ENCODE measurements at regions of chrX and their contacts with region 1.

Region 1: DNA sequence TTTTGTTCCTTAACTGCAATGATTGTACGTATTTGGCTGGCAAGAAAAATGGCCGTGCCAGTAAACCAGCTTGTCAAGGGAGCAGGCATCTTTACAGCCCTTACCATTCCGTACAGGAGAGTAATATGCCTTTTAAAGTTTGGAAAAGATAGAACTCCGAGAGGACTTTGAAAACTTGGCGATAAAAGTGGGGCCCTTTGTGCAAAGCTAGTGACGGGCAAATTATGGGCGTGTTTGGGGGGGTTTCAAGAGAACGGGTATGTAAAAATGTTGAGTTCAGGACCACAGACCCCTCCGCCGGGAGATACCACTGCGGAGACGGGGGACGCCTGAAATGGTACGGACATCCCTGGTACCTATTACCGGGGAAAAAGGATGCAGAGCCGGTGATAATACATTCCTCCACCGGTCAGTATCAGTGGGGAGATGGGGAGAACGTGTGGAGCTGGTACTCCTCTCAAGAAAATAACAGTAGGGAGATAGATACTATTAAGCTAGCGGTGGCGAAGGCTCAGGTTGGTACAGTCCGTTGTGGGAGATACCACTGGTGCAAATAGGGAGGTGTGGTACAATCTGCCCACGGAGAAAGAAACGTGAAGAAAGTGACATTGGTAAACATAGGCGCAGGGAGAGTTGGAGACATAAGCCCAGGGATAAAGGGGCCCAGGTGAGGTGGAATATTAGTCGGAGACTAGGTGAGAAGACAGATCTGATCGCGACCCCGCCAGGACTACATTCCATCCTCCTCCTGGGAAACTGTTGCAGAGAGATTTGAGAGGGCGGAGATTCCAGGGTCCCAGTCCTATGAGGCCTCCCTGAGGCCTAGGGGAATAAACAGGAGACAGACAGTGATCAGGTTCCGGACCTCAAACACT is 14.5 kb downstream of the SPACA5 start:
- DNase-seq: peak; percentile 84
- H3K4me3 ChIP-seq: peak overlapping the region; percentile 56 to 90 (median 61)
- H3K27ac ChIP-seq: peak overlapping the region; percentile 98
- H3K4me1 ChIP-seq: peaks cover 4% of the 10 kb centered on the region
- H3K27me3 ChIP-seq: no peaks in the 10 kb centered on the region
- CTCF ChIP-seq: no peak
- POLR2A ChIP-seq: no peak

Region 2: DNA sequence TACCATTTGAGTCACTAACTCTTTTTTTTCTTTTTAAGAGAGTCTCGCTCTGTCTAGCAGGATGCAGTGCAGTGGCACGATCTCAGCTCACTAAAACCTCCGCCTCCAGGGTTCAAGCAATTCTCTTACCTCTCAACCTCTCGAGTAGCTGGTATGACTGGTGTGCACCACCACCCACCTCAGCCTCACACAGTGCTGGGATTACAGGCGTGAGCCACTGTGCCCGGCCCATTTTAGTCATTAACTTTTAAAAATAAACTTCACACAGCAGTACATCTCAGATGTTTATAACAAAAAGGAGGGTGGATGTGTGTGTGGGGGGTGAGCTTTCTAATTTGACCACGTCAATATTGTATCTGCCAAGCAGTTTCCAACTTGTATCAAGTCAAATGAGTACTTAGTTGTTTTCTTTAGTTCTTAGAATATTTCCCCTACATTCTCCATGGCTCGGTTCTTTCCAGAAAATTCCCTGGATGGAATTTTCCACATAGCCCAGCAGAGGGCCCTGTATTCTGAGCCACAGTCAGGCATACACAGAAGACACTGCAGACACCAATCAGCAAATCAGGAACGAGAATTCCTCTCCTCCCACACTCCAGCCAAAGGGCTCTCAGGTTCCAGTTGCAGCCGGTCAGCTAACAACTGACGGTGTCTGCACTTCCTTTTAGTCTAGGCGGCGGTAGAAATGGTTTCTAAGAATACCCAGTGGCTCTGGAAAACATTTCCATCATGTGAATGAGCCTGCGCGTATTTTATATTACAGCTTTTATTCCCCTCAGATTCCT is 480.3 kb before region 1 on chrX:
- CTCF ChIA-PET with region 1: no interaction called
- POLR2A ChIA-PET with region 1: no interaction called
- dilution Hi-C with region 1: no loop called
- intact Hi-C with region 1: loop called (anchors 1 kb)
- DNase-seq: peak; percentile 92
- H3K4me3 ChIP-seq: peak overlapping the region in 1 of 3 experiments; percentile 32
- H3K27ac ChIP-seq: peak overlapping the region; percentile 37
- H3K4me1 ChIP-seq: peaks cover 4% of the 10 kb centered on the region
- H3K27me3 ChIP-seq: no peaks in the 10 kb centered on the region
- CTCF ChIP-seq: peak; percentile 47 to 54
- POLR2A ChIP-seq: no peak

Region 3: GRCh38 chrX:47658684-47659515 is 362.4 kb before region 1 on chrX and contains the start of gene UXT:
- CTCF ChIA-PET with region 1: no interaction called
- POLR2A ChIA-PET with region 1: no interaction called
- dilution Hi-C with region 1: no loop called
- intact Hi-C with region 1: loop called (anchors 1 kb)
- DNase-seq: peak; percentile 91
- H3K4me3 ChIP-seq: peak within 1 kb of the TSS; percentile 17 to 80 (median 77)
- H3K27ac ChIP-seq: peak within 1 kb of the TSS; percentile 79
- H3K4me1 ChIP-seq: peaks cover 5% of the 10 kb centered on the region
- H3K27me3 ChIP-seq: no peaks in the 10 kb centered on the region
- CTCF ChIP-seq: no peak
- POLR2A ChIP-seq: peak; percentile 54
- total RNA-seq, gene UXT: 91.2 and 95.7 TPM in 2 replicates

Region 4: GRCh38 chrX:47697191-47697590 is 324.1 kb before region 1 on chrX:
- CTCF ChIA-PET with region 1: no interaction called
- POLR2A ChIA-PET with region 1: no interaction called
- dilution Hi-C with region 1: no loop called
- intact Hi-C with region 1: no loop called
- DNase-seq: no peak
- H3K4me3 ChIP-seq: no peak overlapping the region
- H3K27ac ChIP-seq: no peak overlapping the region
- H3K4me1 ChIP-seq: no peaks in the 10 kb centered on the region
- H3K27me3 ChIP-seq: peaks cover 2 to 4% of the 10 kb centered on the region in 2 experiments
- CTCF ChIP-seq: no peak
- POLR2A ChIP-seq: no peak

Region 5: DNA sequence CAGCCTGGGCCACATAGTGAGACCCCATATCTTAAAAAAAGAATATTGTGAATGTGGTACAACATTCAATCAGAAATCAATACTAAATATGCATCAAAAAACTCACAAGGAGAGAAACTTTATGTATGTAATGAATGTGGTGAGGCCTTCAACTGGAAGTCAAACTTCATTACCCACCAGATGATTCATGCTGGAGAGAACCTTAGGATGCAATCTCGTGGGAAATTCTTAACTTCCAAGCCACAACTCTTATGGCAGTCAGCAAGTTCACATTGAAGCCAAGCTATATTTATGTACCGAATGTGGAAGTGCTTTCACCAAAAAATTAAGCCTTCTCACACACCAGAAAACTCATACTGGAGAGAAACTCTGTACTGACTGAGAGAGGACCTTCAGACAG is 277.8 kb before region 1 on chrX:
- CTCF ChIA-PET with region 1: no interaction called
- POLR2A ChIA-PET with region 1: no interaction called
- dilution Hi-C with region 1: no loop called
- intact Hi-C with region 1: no loop called
- DNase-seq: no peak
- H3K4me3 ChIP-seq: no peak overlapping the region
- H3K27ac ChIP-seq: no peak overlapping the region
- H3K4me1 ChIP-seq: no peaks in the 10 kb centered on the region
- H3K27me3 ChIP-seq: no peaks in the 10 kb centered on the region
- CTCF ChIP-seq: no peak
- POLR2A ChIP-seq: no peak

Region 6: GRCh38 chrX:47854474-47854873 is 166.8 kb before region 1 on chrX:
- CTCF ChIA-PET with region 1: no interaction called
- POLR2A ChIA-PET with region 1: no interaction called
- dilution Hi-C with region 1: no loop called
- intact Hi-C with region 1: loop called (anchors 1 kb)
- DNase-seq: peak; percentile 30
- H3K4me3 ChIP-seq: no peak overlapping the region
- H3K27ac ChIP-seq: no peak overlapping the region
- H3K4me1 ChIP-seq: peaks cover 2% of the 10 kb centered on the region
- H3K27me3 ChIP-seq: no peaks in the 10 kb centered on the region
- CTCF ChIP-seq: peak in 1 of 2 donors; percentile 35
- POLR2A ChIP-seq: no peak